Right ventricle myocardium superior (tissue), 1 donor: ENCODE measurements at regions of chr5 and their contacts with region 1.

Region 1: DNA sequence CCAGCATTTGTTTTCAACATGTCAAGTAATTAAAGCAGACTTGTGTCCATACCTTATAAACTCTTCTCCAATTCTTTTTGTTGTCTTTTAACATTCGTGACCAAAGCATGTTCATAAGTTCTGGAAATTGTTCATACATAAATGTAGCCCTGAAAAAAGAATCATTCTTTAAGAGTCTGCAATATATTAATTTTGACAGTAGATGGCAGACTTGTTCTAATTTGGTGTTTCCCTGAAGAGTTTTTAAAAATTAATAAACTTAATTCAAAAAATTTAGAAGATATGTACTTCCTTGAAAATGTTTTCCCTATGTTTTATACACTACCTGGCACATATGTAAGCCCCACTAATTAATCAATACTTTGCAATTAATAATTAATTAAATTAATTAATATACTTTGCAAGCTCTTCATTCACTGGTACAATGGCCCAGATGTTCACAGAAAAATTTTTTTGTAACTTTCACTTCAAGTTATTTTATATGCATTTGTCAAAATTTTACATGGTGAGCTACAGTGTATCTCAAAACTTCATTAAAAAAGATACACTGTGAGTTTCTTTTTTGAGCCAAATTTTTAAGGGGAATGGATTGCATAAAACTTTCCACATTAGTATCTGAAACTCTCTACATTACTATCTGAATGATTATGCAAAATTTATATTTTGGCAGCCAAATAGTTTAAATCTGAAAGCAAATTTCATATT is 42.1 kb downstream of the CLINT1 start:
- DNase-seq: no peak
- ATAC-seq: no peak

Region 2: GRCh38 chr5:157607371-157608161 is 209.3 kb before region 1 on chr5:
- intact Hi-C with region 1: no loop called
- DNase-seq: no peak
- ATAC-seq: no peak

Region 3: DNA sequence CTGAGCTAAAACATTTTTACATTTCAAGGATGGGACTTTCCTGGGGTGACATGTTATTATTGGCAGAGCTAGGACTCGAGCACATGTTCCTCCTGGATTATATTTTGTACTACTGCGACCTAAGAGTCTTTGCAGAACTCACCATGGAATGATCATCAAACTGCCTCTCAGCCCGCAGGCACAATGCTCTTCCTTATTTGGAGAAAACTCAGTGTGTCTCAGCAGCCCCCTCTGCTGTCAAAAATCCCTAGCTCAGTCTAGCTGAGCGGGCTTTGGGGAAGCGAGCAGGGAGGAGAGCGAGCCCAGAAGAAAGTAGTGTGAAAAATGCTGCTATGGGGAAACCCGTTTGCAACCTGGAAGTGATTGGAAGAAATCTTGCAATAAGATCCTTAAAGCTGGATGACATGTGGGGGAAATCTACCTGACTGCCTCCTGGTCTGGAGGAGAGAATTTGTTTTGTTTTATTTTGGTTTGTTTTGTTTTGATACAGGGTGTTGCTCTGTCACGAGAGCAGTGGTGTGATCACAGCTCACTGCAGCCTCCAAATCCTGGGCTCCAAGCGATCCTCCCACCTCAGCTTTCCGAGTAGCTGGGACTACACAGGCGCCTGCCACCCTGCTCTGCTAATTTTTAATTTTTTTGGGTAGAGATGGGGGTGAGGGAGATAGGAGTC is 132.0 kb after region 1 on chr5:
- intact Hi-C with region 1: loop called (anchors 2 kb)
- DNase-seq: peak; percentile 89
- ATAC-seq: peak; percentile 100

Region 4: GRCh38 chr5:157994906-157995519 is 178.2 kb after region 1 on chr5:
- intact Hi-C with region 1: loop called (anchors 5 kb)
- DNase-seq: peak; percentile 74
- ATAC-seq: peak; percentile 99

Region 5: GRCh38 chr5:158751961-158752655 is 935.3 kb after region 1 on chr5:
- intact Hi-C with region 1: no loop called
- DNase-seq: no peak
- ATAC-seq: no peak

Region 6: DNA sequence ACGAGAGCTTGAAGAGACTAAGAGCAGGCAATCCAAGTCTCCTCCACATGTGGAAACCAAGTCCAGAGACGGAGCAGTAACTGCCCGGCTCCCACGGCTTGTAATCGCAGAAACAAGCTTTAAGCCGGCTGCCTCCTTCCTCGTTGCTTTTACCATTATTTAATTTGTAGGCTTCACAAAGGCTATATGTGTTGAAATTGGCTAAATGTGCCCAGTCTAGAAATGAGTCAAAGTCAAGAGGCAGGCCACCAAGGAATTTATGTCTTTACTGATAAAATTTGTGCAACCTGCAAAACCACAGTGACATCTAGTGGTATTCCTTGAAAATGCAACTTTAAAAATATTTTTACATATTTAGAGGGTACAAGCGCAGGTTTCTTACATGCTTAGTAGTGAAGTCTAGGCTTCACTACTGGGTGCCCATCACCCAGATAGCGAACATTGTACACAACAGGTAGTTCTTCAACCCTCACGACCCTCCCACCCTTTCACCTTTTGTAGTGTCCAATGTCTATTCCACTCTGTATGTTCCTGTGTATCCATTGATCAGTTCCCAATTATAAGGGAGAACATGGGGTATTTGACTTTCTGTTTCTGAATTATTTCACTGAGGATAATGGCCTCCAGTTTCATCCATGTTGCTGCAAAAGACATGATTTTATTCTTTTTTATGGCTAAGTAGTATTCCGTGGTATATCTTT is 1316.4 kb after region 1 on chr5:
- intact Hi-C with region 1: loop called (anchors 10 kb)
- DNase-seq: no peak
- ATAC-seq: peak; percentile 65